Activated CD8-positive, alpha-beta T cell treated with anti-CD3 and anti-CD28 coated beads, Interleukin-2, amount 10 ng/mL, durations not matched to agents 7 days and 5 days (primary cell): ENCODE measurements at regions of chr9 and their contacts with region 1.

Region 1: DNA sequence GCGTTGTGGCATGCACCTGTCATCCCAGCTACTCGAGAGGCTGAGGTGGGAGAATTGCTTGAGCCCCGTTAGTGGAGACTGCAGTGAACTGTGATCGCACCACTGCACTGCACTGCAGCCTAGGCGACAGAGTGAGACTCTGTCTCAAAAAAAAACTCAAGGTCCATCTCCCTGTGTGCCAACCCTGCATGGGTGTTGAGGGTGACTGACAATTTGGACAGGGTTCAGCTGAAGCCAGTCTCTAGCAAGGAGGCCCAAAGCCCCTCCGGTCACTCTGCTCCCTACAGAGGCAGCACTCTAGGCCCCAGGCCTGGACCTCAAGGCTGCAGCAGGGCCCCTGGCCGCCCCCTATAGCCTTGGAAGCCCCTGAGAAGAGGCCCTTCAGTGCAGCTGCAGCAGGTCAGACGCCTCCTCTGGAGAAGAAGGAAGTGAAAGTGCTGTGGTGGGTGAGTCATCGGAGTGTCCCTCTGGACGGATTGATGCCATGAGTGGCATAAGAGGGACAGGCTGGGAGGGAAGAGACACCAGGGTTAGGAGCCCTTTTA is 39.2 kb upstream of the NEK6 start:
- DNase-seq: peak; percentile 57
- ATAC-seq: peak; percentile 60
- H3K4me3 Mint-ChIP-seq: no peak overlapping the region
- H3K27ac Mint-ChIP-seq: peak overlapping the region; percentile 95
- H3K4me1 Mint-ChIP-seq: peaks cover 72% of the 10 kb centered on the region
- H3K27me3 Mint-ChIP-seq: peaks cover 3% of the 10 kb centered on the region

Region 2: GRCh38 chr9:124202447-124202971 is 16.0 kb before region 1 on chr9:
- CTCF ChIA-PET with region 1: interaction called, 8 read pairs
- POLR2A ChIA-PET with region 1: interaction called, 19 read pairs
- DNase-seq: peak; percentile 92
- ATAC-seq: peak; percentile 97
- H3K4me3 Mint-ChIP-seq: peak overlapping the region; percentile 67
- H3K27ac Mint-ChIP-seq: peak overlapping the region; percentile 99
- H3K4me1 Mint-ChIP-seq: peaks cover 80% of the 10 kb centered on the region
- H3K27me3 Mint-ChIP-seq: no peaks in the 10 kb centered on the region